Natural killer cell (primary cell): ENCODE measurements at regions of chrX and their contacts with region 1.

Region 1: GRCh38 chrX:150219374-150220185 is 143.5 kb upstream of the MAMLD1 start:
- DNase-seq: no peak
- ATAC-seq: no peak
- H3K4me3 ChIP-seq: no peak overlapping the region
- H3K4me3 Mint-ChIP-seq: no peak overlapping the region
- H3K27ac ChIP-seq: no peak overlapping the region
- H3K27ac Mint-ChIP-seq: no peak overlapping the region
- H3K4me1 ChIP-seq: no peaks in the 10 kb centered on the region
- H3K4me1 Mint-ChIP-seq: no peaks in the 10 kb centered on the region
- H3K27me3 ChIP-seq: no peaks in the 10 kb centered on the region
- H3K27me3 Mint-ChIP-seq: peaks cover 4 to 5% of the 10 kb centered on the region in 2 donors
- CTCF ChIP-seq: no peak

Region 2: DNA sequence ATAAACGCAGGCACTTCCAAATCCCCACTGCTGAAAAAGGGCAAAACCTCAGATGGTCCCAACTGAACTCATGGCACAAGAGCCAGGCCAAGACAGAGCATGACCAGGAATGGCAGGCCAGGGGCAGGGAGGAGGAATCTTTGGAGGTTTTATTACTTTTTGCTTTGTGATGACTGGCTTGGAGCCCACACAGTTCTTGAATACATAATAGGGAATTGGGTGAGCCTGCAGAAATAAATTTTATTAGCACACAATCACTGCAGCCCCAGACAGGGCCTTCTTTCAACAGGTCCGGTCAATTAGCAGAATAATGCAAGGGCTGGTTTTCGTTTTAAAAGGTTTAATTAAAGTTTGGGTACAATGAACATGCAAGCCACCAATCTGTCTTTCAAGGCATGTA is 120.2 kb after region 1 on chrX:
- intact Hi-C with region 1: loop called (anchors 5 kb)
- DNase-seq: no peak
- ATAC-seq: no peak
- H3K4me3 ChIP-seq: no peak overlapping the region
- H3K4me3 Mint-ChIP-seq: no peak overlapping the region
- H3K27ac ChIP-seq: no peak overlapping the region
- H3K27ac Mint-ChIP-seq: no peak overlapping the region
- H3K4me1 ChIP-seq: no peaks in the 10 kb centered on the region
- H3K4me1 Mint-ChIP-seq: no peaks in the 10 kb centered on the region
- H3K27me3 ChIP-seq: no peaks in the 10 kb centered on the region
- H3K27me3 Mint-ChIP-seq: peaks cover 0 to 1% of the 10 kb centered on the region in 2 donors
- CTCF ChIP-seq: no peak

Region 3: DNA sequence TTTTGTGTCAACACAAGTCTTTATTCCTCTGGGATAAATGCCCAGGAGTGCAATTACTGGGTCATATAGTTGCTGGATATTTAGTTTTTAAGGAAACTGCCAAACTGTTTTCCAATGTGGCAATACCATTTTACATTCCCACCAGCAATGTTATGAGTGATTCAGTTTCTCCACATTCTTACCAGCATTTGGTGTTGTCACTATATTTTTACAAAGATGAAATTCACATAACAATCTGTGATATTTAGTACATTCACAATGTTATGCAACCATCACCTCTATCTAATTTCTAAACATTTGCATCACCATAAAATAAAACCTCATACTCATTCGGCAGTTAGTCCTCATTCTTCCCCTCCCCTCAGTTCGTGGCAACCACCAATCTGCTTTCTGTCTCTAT is 218.6 kb after region 1 on chrX:
- intact Hi-C with region 1: no loop called
- DNase-seq: no peak
- ATAC-seq: no peak
- H3K4me3 ChIP-seq: no peak overlapping the region
- H3K4me3 Mint-ChIP-seq: no peak overlapping the region
- H3K27ac ChIP-seq: no peak overlapping the region
- H3K27ac Mint-ChIP-seq: no peak overlapping the region
- H3K4me1 ChIP-seq: no peaks in the 10 kb centered on the region
- H3K4me1 Mint-ChIP-seq: no peaks in the 10 kb centered on the region
- H3K27me3 ChIP-seq: no peaks in the 10 kb centered on the region
- H3K27me3 Mint-ChIP-seq: peaks cover 9 to 48% of the 10 kb centered on the region in 2 donors
- CTCF ChIP-seq: no peak